Head of caudate nucleus (tissue), 42 donors: ENCODE measurements at regions of chr6 and their contacts with region 1.

Region 1: DNA sequence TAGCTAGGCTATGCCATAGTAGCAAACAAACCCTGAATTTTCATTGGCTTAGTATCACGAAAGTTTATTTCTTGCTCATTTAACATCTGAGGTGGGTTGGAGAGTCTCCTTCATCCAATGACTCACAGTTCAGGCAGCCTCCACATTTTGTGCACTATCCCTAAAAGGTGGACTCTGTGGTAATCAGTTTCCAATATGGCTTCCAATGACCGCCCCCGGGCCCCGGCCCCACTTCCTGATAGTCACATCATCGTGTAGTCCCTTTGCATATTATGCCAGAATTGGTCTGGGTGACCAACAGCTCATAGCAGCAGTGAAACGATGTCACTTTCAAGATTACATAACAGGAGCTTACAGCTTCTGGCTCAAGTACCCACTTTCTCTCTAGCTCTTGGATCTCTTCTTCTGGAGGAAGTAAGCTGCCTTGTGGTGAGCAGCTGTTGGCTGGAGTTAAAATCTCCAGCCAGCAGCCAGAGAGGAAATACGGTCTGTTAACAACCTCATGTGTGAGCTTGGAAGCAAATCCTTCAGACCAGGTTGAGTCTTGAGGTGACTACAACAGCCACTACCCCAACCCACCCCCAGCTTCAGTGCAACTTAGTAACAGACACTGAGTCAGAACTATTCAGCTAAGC is 7.8 kb downstream of the HCRTR2 start:
- DNase-seq: no peak

Region 2: GRCh38 chr6:54847672-54848597 is 334.2 kb before region 1 on chr6:
- intact Hi-C with region 1: no loop called
- DNase-seq: no peak

Region 3: DNA sequence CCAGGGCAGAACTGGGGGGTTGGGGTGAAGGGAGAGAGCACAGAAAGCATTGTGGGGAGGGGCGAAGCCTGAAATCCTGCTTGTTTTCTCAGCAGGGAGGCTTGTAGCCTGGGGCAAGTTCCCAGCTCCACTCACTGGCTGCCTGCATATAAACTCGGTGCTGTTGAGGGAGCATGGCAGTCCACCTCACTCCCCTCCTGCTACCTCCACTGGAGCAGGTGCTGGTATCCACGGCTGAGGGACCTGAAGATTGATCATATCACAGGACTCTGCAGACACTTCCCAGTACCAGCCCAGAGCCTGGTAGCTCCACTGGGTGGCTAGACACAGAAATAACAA is 73.4 kb before region 1 on chr6:
- intact Hi-C with region 1: no loop called
- DNase-seq: no peak

Region 4: GRCh38 chr6:55898342-55898741 is 716.2 kb after region 1 on chr6:
- intact Hi-C with region 1: loop called (anchors 10 kb)
- DNase-seq: no peak